Activated T-helper 2 cell treated with anti-CD3 and anti-CD28 coated beads, Interferon-gamma antibody, Interleukin-2, Interleukin-4, amounts not matched to agents 10 μg/mL and 5 μg/mL and 100 μg/mL, durations not matched to agents 14 hours and 24 hours and 36 hours (primary cell): ENCODE measurements at regions of chr2 and their contacts with region 1.

Region 1: DNA sequence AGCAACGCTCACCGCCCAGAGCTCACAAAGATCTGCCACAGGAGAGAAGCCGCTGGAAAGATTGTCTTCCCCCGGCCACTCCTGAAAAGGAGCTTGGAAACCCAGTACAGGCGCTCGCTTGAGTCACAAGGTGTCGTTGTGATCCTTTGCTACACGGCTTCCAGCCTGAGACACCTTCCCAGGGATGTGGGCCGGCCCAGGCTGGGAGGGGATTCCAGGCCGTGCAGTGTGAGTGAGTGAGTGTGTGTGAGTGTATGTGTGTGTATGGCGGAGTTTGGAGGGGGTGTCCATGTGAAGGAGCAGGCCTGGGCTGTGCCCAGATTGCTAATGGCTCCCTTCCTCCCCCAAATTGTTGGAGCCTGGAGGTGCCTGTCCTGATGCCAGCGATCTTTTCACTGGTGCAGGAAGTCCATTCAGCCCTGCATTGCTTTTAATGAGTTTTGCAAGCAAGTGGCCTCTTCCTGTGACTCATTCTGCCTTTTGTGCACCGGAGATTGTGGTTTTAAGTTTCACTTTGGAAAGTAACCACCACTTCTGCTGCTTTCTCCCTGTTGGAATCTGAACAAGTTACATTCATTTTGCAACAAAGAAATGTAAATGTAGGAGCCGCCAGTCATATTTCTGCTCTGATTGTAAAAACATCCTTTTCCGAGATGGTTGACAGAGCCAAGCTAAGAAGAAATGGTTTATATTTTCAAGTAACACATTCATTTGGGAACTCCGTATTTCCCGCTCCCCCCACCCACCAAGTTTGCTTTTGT is 83.7 kb downstream of the LPIN1 start:
- DNase-seq: peak; percentile 61
- H3K4me3 Mint-ChIP-seq: peak overlapping the region; percentile 51
- H3K27ac Mint-ChIP-seq: peak overlapping the region; percentile 56
- H3K4me1 Mint-ChIP-seq: peaks cover 31% of the 10 kb centered on the region
- H3K27me3 Mint-ChIP-seq: peaks cover 37% of the 10 kb centered on the region

Region 2: DNA sequence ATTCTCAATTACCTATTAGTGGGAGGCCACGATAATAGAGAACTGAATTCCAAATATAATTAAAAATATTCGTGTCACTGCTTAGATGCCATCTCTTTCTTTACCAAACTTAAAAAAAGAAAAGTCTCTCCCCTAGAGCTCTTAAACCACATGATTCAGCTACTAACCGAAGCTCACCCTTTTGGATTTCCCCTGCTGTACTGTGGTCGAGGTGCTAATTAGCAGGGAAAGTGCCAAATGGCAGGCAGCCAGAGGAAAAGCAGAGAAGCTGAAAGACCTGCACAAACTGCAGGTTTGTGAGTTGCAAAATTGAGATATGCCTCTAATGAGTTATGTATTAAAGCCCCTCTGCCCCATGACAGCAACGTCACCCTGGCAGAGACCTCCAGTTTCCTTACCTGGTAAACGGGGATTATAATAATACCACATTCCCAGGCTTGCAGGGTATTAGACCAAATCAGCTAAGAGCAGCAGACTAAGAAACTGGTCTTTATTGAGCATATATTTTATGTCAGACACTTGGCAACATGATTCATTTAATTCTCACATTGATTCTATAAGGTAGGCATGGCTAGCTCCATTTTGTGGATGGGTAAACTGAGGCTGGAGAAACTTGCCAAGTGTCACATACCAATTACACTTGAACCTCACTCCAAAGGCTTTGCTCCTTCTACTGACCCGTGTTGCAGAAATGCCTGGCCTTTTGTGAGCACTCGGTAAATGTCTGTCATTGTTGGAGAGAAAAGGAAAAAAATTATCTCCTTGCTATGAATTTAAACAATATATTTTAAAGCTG is 176.0 kb after region 1 on chr2:
- intact Hi-C with region 1: loop called (anchors 2 kb)
- DNase-seq: peak; percentile 24
- H3K4me3 Mint-ChIP-seq: no peak overlapping the region
- H3K27ac Mint-ChIP-seq: no peak overlapping the region
- H3K4me1 Mint-ChIP-seq: peaks cover 10% of the 10 kb centered on the region
- H3K27me3 Mint-ChIP-seq: peaks cover 40% of the 10 kb centered on the region

Region 3: DNA sequence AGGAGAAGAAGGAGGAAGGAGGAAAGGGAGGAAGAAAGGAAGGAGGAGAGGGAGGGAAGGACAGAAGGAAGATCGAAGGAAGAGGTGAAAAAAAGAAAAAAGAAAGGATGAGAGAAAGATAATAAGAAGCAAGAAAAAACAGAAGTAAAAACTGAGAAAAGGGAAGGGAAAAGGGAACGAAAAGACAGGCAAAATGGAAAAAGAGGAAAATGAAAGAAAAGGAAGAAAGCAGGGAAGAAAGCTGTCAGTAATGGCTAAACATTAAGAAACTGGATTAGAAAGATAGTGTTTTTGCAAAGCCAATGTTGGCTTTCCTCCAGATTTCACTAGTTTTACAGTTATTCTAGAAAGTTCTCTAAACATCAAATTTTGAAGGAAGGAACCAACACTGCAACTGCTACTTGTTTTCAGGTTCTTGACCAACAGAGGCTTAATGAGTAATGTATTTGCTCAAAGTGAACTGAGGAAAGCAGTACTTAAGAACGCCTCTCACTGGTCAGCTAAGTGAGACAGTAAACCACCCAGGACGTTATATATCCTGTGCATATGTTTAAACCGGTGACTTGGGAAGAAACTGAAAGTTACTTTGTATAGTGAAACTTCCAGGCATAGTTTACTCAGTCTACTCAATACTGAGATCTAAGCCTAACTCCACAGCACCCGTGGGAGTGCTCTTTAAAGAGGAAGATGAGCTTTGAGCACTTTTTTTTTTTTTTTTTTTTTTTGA is 600.4 kb after region 1 on chr2:
- intact Hi-C with region 1: loop called (anchors 2 kb)
- DNase-seq: no peak
- H3K4me3 Mint-ChIP-seq: peak overlapping the region; percentile 18
- H3K27ac Mint-ChIP-seq: peak overlapping the region; percentile 63
- H3K4me1 Mint-ChIP-seq: peaks cover 29% of the 10 kb centered on the region
- H3K27me3 Mint-ChIP-seq: no peaks in the 10 kb centered on the region

Region 4: GRCh38 chr2:12716282-12717190 is 886.4 kb after region 1 on chr2 and contains the start of gene TRIB2:
- intact Hi-C with region 1: loop called (anchors 1 kb)
- DNase-seq: peak; percentile 83
- H3K4me3 Mint-ChIP-seq: peak within 1 kb of the TSS; percentile 97
- H3K27ac Mint-ChIP-seq: peak within 1 kb of the TSS; percentile 78
- H3K4me1 Mint-ChIP-seq: peaks cover 45% of the 10 kb centered on the region
- H3K27me3 Mint-ChIP-seq: peaks cover 17% of the 10 kb centered on the region
- total RNA-seq, gene TRIB2: 3.9 TPM in 2 replicates

Region 5: GRCh38 chr2:12948961-12949353 is 1118.8 kb after region 1 on chr2:
- intact Hi-C with region 1: loop called (anchors 5 kb)
- DNase-seq: no peak
- H3K4me3 Mint-ChIP-seq: no peak overlapping the region
- H3K27ac Mint-ChIP-seq: no peak overlapping the region
- H3K4me1 Mint-ChIP-seq: peaks cover 35% of the 10 kb centered on the region
- H3K27me3 Mint-ChIP-seq: peaks cover 51% of the 10 kb centered on the region